ENCODE measurements at regions of chr3 and their contacts with region 1.

Region 1: DNA sequence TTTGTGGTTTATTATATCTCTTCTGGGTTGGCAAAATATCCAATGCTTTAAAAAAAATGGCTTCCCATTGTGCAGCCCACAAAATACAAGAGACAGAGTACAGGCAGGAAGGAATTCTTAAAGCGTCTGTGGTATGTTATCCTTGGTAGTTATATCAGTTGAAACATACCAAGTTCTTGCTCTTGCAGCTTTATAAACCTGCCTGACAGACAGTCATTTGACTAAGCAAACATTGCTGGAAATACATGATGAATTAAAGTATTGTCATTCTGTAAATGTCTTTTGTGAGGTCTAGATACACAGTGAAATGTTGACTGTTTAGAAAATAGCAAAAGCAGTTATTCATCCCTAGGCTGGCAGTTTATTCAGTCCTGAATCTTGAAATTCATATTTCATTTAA is 44.8 kb upstream of the MAP3K13 start:
- DNase-seq: no peak
- ATAC-seq: peak; percentile 37
- H3K4me3 ChIP-seq: no peak overlapping the region
- H3K27ac ChIP-seq: no peak overlapping the region
- H3K4me1 ChIP-seq: peaks cover 9% of the 10 kb centered on the region; the same call in 1 of the 2 replicates
- H3K27me3 ChIP-seq: no peaks in the 10 kb centered on the region
- CTCF ChIP-seq: no peak
- EP300 ChIP-seq: no peak
- POLR2A ChIP-seq: no peak
- RAD21 ChIP-seq: no peak

Region 2: DNA sequence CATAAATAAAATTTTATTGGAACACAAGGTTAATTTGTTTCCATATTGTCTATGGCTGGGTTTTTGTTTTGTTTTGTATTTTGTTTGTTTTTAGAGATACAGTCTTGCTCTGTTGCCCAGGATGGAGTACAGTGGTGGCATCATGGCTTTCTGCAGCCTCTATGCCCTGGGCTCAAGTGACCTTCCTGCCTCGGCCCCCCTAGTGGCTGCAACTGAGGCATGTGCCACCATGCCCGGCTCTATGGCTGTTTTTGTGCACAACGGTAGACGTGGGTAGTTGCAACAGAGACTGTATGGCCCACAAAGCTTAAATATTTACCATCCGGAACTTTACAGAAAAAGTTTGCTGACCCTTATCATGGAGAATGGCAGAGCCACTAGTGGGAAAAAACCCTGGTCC is 118.5 kb before region 1 on chr3:
- CTCF ChIA-PET with region 1: no interaction called
- POLR2A ChIA-PET with region 1: no interaction called
- RAD21 ChIA-PET with region 1: no interaction called
- SMC1A ChIA-PET with region 1: no interaction called
- in situ Hi-C with region 1: no loop called
- intact Hi-C with region 1: no loop called
- DNase-seq: no peak
- ATAC-seq: 0 out of 3 replicates have a peak, but pooled peaks have one; percentile 34
- H3K4me3 ChIP-seq: no peak overlapping the region
- H3K27ac ChIP-seq: no peak overlapping the region
- H3K4me1 ChIP-seq: no peaks in the 10 kb centered on the region
- H3K27me3 ChIP-seq: no peaks in the 10 kb centered on the region
- CTCF ChIP-seq: peak in 1 of 3 experiments; percentile 17; a peak in 1 of 6 replicates
- EP300 ChIP-seq: no peak
- POLR2A ChIP-seq: no peak
- RAD21 ChIP-seq: no peak

Region 3: GRCh38 chr3:185332026-185332735 is 14.0 kb after region 1 on chr3:
- CTCF ChIA-PET with region 1: interaction called, 4 read pairs
- POLR2A ChIA-PET with region 1: interaction called, 8 read pairs
- RAD21 ChIA-PET with region 1: no interaction called
- SMC1A ChIA-PET with region 1: interaction called, 12 read pairs
- in situ Hi-C with region 1: no loop called
- intact Hi-C with region 1: no loop called
- DNase-seq: peak; percentile 52
- ATAC-seq: peak; percentile 99
- H3K4me3 ChIP-seq: no peak overlapping the region
- H3K27ac ChIP-seq: no peak overlapping the region; the same call in 1 of the 2 replicates
- H3K4me1 ChIP-seq: peaks cover 10% of the 10 kb centered on the region
- H3K27me3 ChIP-seq: no peaks in the 10 kb centered on the region
- CTCF ChIP-seq: no peak
- EP300 ChIP-seq: 0 out of 4 replicates have a peak, but pooled peaks of 1 of the 2 experiments have one; percentile 14
- POLR2A ChIP-seq: no peak
- RAD21 ChIP-seq: no peak

Region 4: GRCh38 chr3:185387646-185388045 is 69.5 kb after region 1 on chr3:
- CTCF ChIA-PET with region 1: no interaction called
- POLR2A ChIA-PET with region 1: no interaction called
- RAD21 ChIA-PET with region 1: no interaction called
- SMC1A ChIA-PET with region 1: no interaction called
- in situ Hi-C with region 1: no loop called
- intact Hi-C with region 1: no loop called
- DNase-seq: no peak
- ATAC-seq: no peak
- H3K4me3 ChIP-seq: no peak overlapping the region
- H3K27ac ChIP-seq: no peak overlapping the region
- H3K4me1 ChIP-seq: no peaks in the 10 kb centered on the region
- H3K27me3 ChIP-seq: no peaks in the 10 kb centered on the region
- CTCF ChIP-seq: no peak
- EP300 ChIP-seq: no peak
- POLR2A ChIP-seq: no peak
- RAD21 ChIP-seq: no peak

Measured in GM12878 (cell line).